Astrocyte of the cerebellum (primary cell): ENCODE measurements at regions of chr19 and their contacts with region 1.

Region 1: GRCh38 chr19:30649934-30650614 is 277.9 kb downstream of the ZNF536 start:
- DNase-seq: peak; percentile 42
- H3K4me3 ChIP-seq: no peak overlapping the region
- CTCF ChIP-seq: peak; percentile 89

Region 2: DNA sequence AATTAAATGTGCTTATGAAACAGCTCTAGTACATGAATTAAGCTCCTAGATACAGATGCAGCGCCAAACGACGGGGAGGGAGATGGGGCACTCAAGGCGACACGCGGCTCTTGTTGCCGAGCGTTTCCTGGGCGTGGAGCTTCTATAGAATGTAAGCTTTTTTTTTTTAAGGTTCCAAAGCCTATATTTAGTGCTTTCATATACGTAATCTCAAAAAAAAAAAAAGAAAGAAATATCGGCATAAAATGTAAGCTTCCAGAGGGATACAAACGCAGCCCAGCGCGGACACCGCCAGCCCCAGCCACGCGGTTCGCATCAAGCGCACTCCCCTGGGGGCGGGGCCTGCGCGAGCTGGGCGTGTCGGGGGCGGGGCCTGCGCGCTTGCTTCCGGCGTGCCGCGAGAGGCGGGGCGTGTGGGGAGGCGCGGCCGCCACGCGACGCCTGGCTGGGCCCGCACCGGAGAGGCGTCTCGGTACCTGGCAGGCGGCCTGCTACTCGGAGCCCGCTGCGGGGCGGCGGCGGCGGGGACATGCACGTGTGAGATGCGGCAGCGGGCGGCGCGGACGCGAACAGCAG is 708.2 kb before region 1 on chr19 and contains the start of gene URI1:
- in situ Hi-C with region 1: loop called (anchors 10 kb)
- DNase-seq: peak; percentile 43
- H3K4me3 ChIP-seq: peak within 1 kb of the TSS; percentile 92
- CTCF ChIP-seq: no peak

Region 3: DNA sequence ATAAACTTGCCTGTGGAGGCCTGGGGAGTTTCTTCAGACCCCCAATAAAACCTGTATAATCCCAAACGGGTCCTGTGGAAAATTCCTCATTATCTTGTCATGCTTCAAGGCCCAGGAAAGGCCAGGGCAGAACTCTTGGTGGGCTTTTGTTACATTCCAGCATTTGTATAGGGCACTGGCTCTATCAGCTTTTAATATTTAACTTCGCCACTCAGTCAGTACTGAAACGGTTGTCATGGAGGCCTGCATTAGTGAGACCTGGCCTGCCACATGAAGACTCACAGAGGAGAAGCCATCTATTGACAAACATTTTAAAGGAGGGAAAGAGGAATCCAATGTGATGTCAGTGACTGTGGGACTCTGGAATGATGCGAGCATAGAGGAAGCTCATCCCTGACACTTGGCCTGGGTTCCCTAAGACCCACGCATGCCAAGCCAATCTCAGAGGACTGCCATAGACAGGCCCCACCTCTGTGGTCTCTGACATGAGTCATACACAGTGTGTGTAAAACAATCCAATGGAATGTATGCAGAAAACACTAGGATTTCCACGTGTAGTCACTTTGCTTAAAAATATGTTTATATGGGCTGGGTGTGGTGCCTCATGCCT is 1747.6 kb after region 1 on chr19:
- in situ Hi-C with region 1: loop called (anchors 25 kb)
- DNase-seq: peak; percentile 35
- H3K4me3 ChIP-seq: no peak overlapping the region
- CTCF ChIP-seq: no peak